ENCODE measurements at regions of chr11 and their contacts with region 1.

Region 1: DNA sequence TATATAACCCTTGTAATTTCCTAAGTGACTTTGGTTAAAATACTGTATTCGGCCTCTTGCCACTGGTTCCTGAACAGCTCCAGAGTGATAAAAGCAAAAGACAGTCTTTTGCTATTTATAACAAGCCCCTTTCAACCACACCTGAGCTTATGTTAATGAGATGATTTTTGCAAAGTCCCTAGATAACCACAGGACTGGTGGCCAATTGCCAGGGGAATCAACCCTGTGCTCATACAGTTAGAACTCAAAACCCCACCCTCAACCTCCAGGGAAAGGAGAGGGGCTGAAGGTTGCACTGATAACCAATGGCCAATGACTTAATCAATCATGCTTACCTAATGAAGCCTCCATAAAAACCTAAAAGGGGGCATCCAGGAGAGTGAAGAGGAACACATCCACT is 77.9 kb downstream of the SIK3 start:
- DNase-seq: peak; percentile 51
- ATAC-seq: peak; percentile 43
- H3K4me3 ChIP-seq: 0 out of 2 replicates have a peak overlapping the region, but pooled peaks have one; percentile 2
- H3K27ac ChIP-seq: peak overlapping the region; percentile 49
- H3K4me1 ChIP-seq: peaks cover 51% of the 10 kb centered on the region
- H3K27me3 ChIP-seq: no peaks in the 10 kb centered on the region
- CTCF ChIP-seq: no peak
- EP300 ChIP-seq: 0 out of 4 replicates have a peak, but pooled peaks of 1 of the 2 experiments have one; percentile 3
- POLR2A ChIP-seq: no peak
- RAD21 ChIP-seq: no peak

Region 2: GRCh38 chr11:116461789-116462188 is 558.5 kb before region 1 on chr11:
- CTCF ChIA-PET with region 1: no interaction called
- POLR2A ChIA-PET with region 1: no interaction called
- RAD21 ChIA-PET with region 1: no interaction called
- SMC1A ChIA-PET with region 1: no interaction called
- in situ Hi-C with region 1: no loop called
- intact Hi-C with region 1: no loop called
- DNase-seq: no peak
- ATAC-seq: no peak
- H3K4me3 ChIP-seq: no peak overlapping the region
- H3K27ac ChIP-seq: no peak overlapping the region
- H3K4me1 ChIP-seq: no peaks in the 10 kb centered on the region
- H3K27me3 ChIP-seq: peaks cover 0 to 12% of the 10 kb centered on the region in 2 experiments; a peak in 3 of 4 replicates
- CTCF ChIP-seq: no peak
- EP300 ChIP-seq: no peak
- POLR2A ChIP-seq: no peak
- RAD21 ChIP-seq: no peak

Region 3: GRCh38 chr11:116927163-116927974 is 92.9 kb before region 1 on chr11:
- CTCF ChIA-PET with region 1: no interaction called
- POLR2A ChIA-PET with region 1: no interaction called
- RAD21 ChIA-PET with region 1: interaction called, 13 read pairs
- SMC1A ChIA-PET with region 1: interaction called, 5 read pairs
- in situ Hi-C with region 1: no loop called
- intact Hi-C with region 1: no loop called
- DNase-seq: no peak
- ATAC-seq: no peak
- H3K4me3 ChIP-seq: no peak overlapping the region
- H3K27ac ChIP-seq: peak overlapping the region; percentile 26; the same call in 1 of the 2 replicates
- H3K4me1 ChIP-seq: peaks cover 64% of the 10 kb centered on the region
- H3K27me3 ChIP-seq: no peaks in the 10 kb centered on the region
- CTCF ChIP-seq: peak in 2 of 3 experiments; percentile 20 to 39; a peak in 2 of 6 replicates
- EP300 ChIP-seq: no peak
- POLR2A ChIP-seq: no peak
- RAD21 ChIP-seq: peak; percentile 56

Region 4: DNA sequence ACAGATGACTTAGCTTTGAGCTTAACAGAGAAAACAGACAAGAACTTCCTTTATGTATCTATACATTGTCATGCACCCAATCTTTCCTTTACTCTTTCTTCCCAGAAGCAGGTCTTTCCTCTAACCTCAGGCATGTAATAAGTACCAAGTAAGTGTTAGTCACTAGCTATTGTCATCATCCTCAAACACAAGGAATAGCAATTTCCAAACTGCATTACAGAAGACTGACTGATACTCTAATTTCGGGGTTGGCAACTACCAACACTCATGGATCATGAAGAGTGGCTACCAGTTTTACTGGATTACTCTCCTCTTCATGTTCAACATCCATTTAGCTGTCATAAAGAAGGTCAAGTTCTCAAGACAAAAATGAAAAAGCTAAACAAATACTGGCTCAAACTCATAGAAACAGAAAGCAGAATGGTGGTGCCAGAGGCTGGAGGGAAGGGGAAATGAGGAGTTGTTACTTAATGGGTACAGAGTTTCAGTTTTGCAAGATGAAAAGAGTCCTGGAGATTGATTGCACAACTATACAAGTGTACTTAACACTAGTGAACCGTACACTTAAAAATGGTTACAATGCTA is 33.7 kb before region 1 on chr11:
- CTCF ChIA-PET with region 1: interaction called, 4 read pairs
- POLR2A ChIA-PET with region 1: interaction called, 7 read pairs
- RAD21 ChIA-PET with region 1: interaction called, 9 read pairs
- SMC1A ChIA-PET with region 1: interaction called, 10 read pairs
- in situ Hi-C with region 1: no loop called
- intact Hi-C with region 1: no loop called
- DNase-seq: peak; percentile 64
- ATAC-seq: peak; percentile 94
- H3K4me3 ChIP-seq: peak overlapping the region; percentile 63
- H3K27ac ChIP-seq: peak overlapping the region; percentile 66; the same call in 1 of the 2 replicates
- H3K4me1 ChIP-seq: peaks cover 27% of the 10 kb centered on the region
- H3K27me3 ChIP-seq: no peaks in the 10 kb centered on the region
- CTCF ChIP-seq: no peak
- EP300 ChIP-seq: no peak
- POLR2A ChIP-seq: no peak
- RAD21 ChIP-seq: no peak

Region 5: DNA sequence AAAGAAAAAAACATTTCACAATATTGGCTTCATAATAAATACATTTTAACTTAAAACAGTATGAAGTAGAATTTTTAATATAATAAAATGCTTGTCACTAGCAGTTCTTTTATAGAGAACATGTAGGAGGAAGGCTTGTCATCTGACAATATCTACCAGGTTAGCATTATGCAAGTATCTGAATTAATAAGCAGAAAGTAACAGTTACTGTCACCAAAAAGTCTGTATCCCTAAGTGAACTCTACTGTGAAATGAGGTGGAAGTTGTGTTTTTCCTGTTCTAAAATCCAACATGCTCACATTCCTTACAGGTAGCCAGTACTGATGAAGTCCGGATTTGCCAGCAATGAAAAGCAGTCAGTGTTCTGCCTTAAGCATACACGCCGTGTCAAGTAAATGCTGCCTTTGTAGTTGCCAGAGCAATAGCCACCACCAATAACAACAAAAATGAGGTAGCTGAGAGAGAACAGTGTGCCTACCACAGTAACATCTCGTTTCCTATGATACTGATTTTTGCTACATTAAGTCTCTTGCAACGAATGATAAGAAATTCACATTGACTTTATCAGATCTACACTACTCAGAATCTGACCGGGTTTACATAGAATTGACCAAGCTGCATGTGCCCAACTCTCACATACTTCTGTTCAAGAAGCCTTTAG is 17.5 kb before region 1 on chr11:
- CTCF ChIA-PET with region 1: interaction called, 5 read pairs
- POLR2A ChIA-PET with region 1: interaction called, 9 read pairs
- RAD21 ChIA-PET with region 1: no interaction called
- SMC1A ChIA-PET with region 1: interaction called, 13 read pairs
- in situ Hi-C with region 1: no loop called
- intact Hi-C with region 1: no loop called
- DNase-seq: no peak
- ATAC-seq: peak; percentile 32
- H3K4me3 ChIP-seq: no peak overlapping the region
- H3K27ac ChIP-seq: no peak overlapping the region
- H3K4me1 ChIP-seq: peaks cover 13% of the 10 kb centered on the region
- H3K27me3 ChIP-seq: no peaks in the 10 kb centered on the region
- CTCF ChIP-seq: no peak
- EP300 ChIP-seq: no peak
- POLR2A ChIP-seq: no peak
- RAD21 ChIP-seq: no peak

Region 6: DNA sequence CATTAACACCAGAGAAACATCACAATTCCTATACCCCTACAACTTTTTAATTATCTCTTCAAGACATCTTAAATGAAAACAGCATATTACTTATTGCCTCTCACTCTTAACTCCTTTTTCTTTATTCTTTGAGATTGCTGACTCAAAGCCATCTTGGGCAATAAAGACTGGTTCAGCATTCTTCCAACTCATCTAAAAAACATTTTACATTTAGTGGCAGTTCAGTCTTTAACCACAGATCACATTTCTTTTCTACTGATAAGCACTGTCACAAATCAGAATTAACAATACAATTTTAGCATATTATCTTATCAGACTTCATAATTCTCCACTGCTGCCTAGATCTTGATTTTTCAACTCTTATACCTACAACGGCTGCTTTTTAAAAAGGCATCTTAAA is 44.0 kb after region 1 on chr11:
- CTCF ChIA-PET with region 1: interaction called, 4 read pairs
- POLR2A ChIA-PET with region 1: interaction called, 4 read pairs
- RAD21 ChIA-PET with region 1: interaction called, 9 read pairs
- SMC1A ChIA-PET with region 1: interaction called, 12 read pairs
- in situ Hi-C with region 1: no loop called
- intact Hi-C with region 1: loop called (anchors 2 kb)
- DNase-seq: no peak
- ATAC-seq: no peak
- H3K4me3 ChIP-seq: no peak overlapping the region
- H3K27ac ChIP-seq: peak overlapping the region; percentile 78
- H3K4me1 ChIP-seq: peaks cover 29% of the 10 kb centered on the region
- H3K27me3 ChIP-seq: no peaks in the 10 kb centered on the region
- CTCF ChIP-seq: no peak
- EP300 ChIP-seq: no peak
- POLR2A ChIP-seq: no peak
- RAD21 ChIP-seq: no peak

Region 7: GRCh38 chr11:117072517-117073461 is 52.5 kb after region 1 on chr11:
- CTCF ChIA-PET with region 1: interaction called, 4 read pairs
- POLR2A ChIA-PET with region 1: interaction called, 3 read pairs
- RAD21 ChIA-PET with region 1: interaction called, 4 read pairs
- SMC1A ChIA-PET with region 1: interaction called, 9 read pairs
- in situ Hi-C with region 1: no loop called
- intact Hi-C with region 1: loop called (anchors 5 kb)
- DNase-seq: peak; percentile 45
- ATAC-seq: peak; percentile 70
- H3K4me3 ChIP-seq: no peak overlapping the region
- H3K27ac ChIP-seq: no peak overlapping the region
- H3K4me1 ChIP-seq: peaks cover 38% of the 10 kb centered on the region
- H3K27me3 ChIP-seq: no peaks in the 10 kb centered on the region
- CTCF ChIP-seq: no peak
- EP300 ChIP-seq: no peak
- POLR2A ChIP-seq: no peak
- RAD21 ChIP-seq: no peak